Natural killer cell (primary cell): ENCODE measurements at regions of chr11 and their contacts with region 1.

Region 1: GRCh38 chr11:13486926-13487660 is 8.7 kb downstream of the PTH start:
- DNase-seq: peak; percentile 68 to 79
- ATAC-seq: peak; percentile 82 to 93 (median 91)
- H3K4me3 ChIP-seq: peak overlapping the region; percentile 22
- H3K4me3 Mint-ChIP-seq: peak overlapping the region; percentile 26
- H3K27ac ChIP-seq: peak overlapping the region; percentile 8
- H3K27ac Mint-ChIP-seq: peak overlapping the region in 1 of 2 donors; percentile 92
- H3K4me1 ChIP-seq: peaks cover 8% of the 10 kb centered on the region
- H3K4me1 Mint-ChIP-seq: peaks cover 9 to 15% of the 10 kb centered on the region in 2 donors
- H3K27me3 ChIP-seq: no peaks in the 10 kb centered on the region
- H3K27me3 Mint-ChIP-seq: peaks cover 0 to 9% of the 10 kb centered on the region in 2 donors
- CTCF ChIP-seq: peak; percentile 54

Region 2: GRCh38 chr11:13503393-13503792 is 16.3 kb after region 1 on chr11:
- intact Hi-C with region 1: no loop called
- DNase-seq: no peak
- ATAC-seq: no peak
- H3K4me3 ChIP-seq: no peak overlapping the region
- H3K4me3 Mint-ChIP-seq: no peak overlapping the region
- H3K27ac ChIP-seq: no peak overlapping the region
- H3K27ac Mint-ChIP-seq: no peak overlapping the region
- H3K4me1 ChIP-seq: no peaks in the 10 kb centered on the region
- H3K4me1 Mint-ChIP-seq: no peaks in the 10 kb centered on the region
- H3K27me3 ChIP-seq: peaks cover 3% of the 10 kb centered on the region
- H3K27me3 Mint-ChIP-seq: peaks cover 14 to 58% of the 10 kb centered on the region in 2 donors
- CTCF ChIP-seq: no peak

Region 3: DNA sequence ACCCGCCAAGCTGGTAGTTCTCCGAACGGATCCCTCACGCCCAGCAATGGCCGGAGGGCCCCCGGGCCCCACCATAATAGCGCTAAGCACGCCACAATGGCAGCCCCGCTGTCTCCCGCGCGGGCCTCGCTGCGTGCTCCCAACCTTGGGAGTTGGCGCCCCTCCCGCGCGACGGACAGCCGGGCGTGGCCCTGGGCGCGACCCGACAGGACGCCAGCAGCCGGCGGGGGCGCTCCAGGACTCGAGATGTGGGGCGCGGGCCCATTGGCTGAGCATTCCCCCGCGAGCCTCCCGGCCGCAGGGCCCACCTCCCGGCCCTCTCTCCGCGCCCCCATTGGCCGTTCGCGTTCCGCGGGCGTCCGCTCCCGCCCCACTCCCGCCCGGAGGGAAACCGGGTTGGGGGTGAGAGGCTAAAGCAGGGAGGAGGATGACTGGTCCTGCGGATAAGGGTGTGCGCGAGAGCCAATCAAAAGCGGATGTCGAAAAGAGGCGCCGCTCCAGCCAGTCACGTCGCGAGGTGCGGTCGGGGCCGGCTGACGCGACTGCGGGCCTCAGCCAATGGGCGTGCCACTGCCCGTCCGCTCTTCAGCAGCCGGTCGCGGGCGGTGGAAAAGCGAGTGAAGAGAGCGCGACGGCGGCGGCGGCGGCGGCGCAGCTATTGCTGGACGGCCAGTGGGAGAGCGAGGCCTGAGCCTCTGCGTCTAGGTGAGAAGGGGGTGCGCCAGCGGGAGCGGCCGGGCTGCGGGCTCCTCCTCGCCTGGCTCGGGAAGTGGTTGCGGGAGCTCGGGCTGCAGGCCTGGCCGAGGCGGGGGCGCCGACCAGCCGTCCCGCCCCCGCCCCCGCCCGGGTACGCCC is 181.2 kb after region 1 on chr11 and contains the start of gene FAR1:
- intact Hi-C with region 1: loop called (anchors 2 kb)
- DNase-seq: peak; percentile 94 to 97
- ATAC-seq: peak; percentile 85 to 96 (median 86)
- H3K4me3 ChIP-seq: peak within 1 kb of the TSS; percentile 81
- H3K4me3 Mint-ChIP-seq: peak within 1 kb of the TSS; percentile 99
- H3K27ac ChIP-seq: peak within 1 kb of the TSS; percentile 78
- H3K27ac Mint-ChIP-seq: peak within 1 kb of the TSS; percentile 88 to 97
- H3K4me1 ChIP-seq: peaks cover 20% of the 10 kb centered on the region
- H3K4me1 Mint-ChIP-seq: peaks cover 40 to 52% of the 10 kb centered on the region in 2 donors
- H3K27me3 ChIP-seq: no peaks in the 10 kb centered on the region
- H3K27me3 Mint-ChIP-seq: peaks cover 0 to 8% of the 10 kb centered on the region in 2 donors
- CTCF ChIP-seq: peak; percentile 58
- total RNA-seq, gene FAR1: 59.5 to 74.7 (median 74.6) TPM

Region 4: DNA sequence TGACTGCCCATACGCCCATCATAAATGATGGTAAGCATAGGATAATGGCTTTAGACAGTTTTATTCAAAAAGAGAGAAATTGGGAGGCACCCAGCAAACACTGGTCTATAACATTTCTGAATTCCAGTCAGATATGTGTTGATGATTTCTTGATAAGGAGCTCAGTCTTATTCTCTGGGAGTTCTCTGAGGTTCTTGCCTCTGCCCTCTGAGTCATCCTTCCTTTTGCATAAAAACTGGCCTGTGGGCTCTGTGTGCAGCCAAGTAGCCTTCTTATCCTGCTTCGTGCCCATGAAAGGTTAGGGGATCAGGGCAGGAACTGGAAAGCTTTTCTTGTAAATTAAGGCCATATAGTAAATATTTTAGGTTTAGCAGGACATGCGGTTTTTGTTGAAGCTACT is 230.2 kb after region 1 on chr11:
- intact Hi-C with region 1: loop called (anchors 10 kb)
- DNase-seq: no peak
- ATAC-seq: peak in 2 of 3 donors; percentile 28 to 48
- H3K4me3 ChIP-seq: no peak overlapping the region
- H3K4me3 Mint-ChIP-seq: no peak overlapping the region
- H3K27ac ChIP-seq: no peak overlapping the region
- H3K27ac Mint-ChIP-seq: peak overlapping the region in 1 of 2 donors; percentile 68
- H3K4me1 ChIP-seq: peaks cover 7% of the 10 kb centered on the region
- H3K4me1 Mint-ChIP-seq: peaks cover 27 to 28% of the 10 kb centered on the region in 2 donors
- H3K27me3 ChIP-seq: no peaks in the 10 kb centered on the region
- H3K27me3 Mint-ChIP-seq: no peaks in the 10 kb centered on the region
- CTCF ChIP-seq: no peak

Region 5: GRCh38 chr11:14249121-14249963 is 762.2 kb after region 1 on chr11:
- intact Hi-C with region 1: loop called (anchors 5 kb)
- DNase-seq: peak; percentile 51 to 84
- ATAC-seq: peak; percentile 58 to 73 (median 64)
- H3K4me3 ChIP-seq: no peak overlapping the region
- H3K4me3 Mint-ChIP-seq: peak overlapping the region; percentile 31
- H3K27ac ChIP-seq: no peak overlapping the region
- H3K27ac Mint-ChIP-seq: no peak overlapping the region
- H3K4me1 ChIP-seq: peaks cover 14% of the 10 kb centered on the region
- H3K4me1 Mint-ChIP-seq: peaks cover 10 to 13% of the 10 kb centered on the region in 2 donors
- H3K27me3 ChIP-seq: no peaks in the 10 kb centered on the region
- H3K27me3 Mint-ChIP-seq: peaks cover 18 to 31% of the 10 kb centered on the region in 2 donors
- CTCF ChIP-seq: peak; percentile 92